Psoas muscle (tissue), 8 donors: ENCODE measurements at regions of chrX and their contacts with region 1.

Region 1: DNA sequence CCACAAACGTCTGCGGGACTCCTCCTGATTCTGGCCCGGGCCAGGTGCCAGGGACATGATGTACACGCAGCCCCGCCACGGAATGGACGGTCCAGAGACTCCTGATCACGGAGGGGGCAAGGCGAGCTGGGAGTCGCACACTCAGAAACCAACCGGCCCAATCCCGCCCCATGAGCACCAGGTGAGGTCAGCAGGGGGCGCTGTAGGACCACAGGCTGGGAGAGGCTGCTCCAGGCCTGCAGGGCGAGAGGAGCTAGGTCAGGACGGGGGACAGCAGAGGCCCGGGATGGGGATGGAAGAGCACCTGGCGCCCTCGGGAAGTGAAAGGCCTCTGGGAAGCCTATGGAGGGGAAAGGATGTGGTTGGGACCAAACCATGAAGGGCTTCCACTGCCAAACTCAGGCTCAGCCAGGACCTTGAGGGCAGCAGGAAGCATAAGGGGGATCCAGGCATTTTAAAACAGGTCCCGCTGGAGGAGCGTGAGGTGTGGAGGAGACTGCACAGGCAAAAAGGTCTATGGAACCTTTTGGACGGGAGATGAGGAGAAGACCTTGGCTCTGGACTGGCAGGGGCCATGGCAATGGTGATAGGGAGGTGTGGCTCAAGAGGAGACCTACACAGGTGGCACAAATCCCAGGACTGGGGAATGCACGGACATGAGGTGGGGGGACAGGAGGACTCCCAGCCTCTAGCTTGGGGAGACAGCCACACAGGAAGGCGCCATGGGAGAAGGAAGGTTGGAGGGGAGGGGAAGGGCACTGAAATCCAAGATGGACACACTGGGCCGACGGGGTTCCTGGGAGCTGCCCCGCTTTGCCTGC is 79.2 kb downstream of the MTMR1 start:
- DNase-seq: peak; percentile 84 to 90
- ATAC-seq: peak; percentile 82 to 90 (median 86)
- H3K4me3 ChIP-seq: no peak overlapping the region
- H3K27ac ChIP-seq: no peak overlapping the region
- H3K4me1 ChIP-seq: no peaks in the 10 kb centered on the region
- H3K27me3 ChIP-seq: no peaks in the 10 kb centered on the region
- CTCF ChIP-seq: peak; percentile 76

Region 2: GRCh38 chrX:150715184-150715583 is 57.2 kb before region 1 on chrX:
- intact Hi-C with region 1: no loop called
- DNase-seq: no peak
- ATAC-seq: no peak
- H3K4me3 ChIP-seq: no peak overlapping the region
- H3K27ac ChIP-seq: no peak overlapping the region
- H3K4me1 ChIP-seq: no peaks in the 10 kb centered on the region
- H3K27me3 ChIP-seq: no peaks in the 10 kb centered on the region
- CTCF ChIP-seq: no peak

Region 3: DNA sequence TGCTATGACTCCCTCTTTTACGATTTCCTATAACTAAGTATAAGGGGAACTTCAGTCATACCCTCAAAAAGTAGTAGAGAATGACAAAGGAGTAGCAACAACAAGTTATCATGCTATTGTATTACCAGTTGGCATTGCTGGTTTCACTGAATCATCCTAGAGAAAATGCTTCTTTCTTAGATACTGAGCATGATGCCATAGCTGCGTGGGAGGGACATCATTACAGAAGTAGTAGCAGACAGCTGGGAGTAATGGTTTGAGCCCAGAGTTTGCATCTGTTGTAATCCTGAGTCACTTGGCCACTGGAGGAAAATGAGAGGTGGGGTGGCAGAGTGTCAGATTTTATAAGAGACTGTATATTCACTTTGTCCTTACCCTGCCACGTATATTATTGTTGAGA is 40.6 kb before region 1 on chrX:
- intact Hi-C with region 1: no loop called
- DNase-seq: no peak
- ATAC-seq: peak; percentile 55 to 81 (median 62)
- H3K4me3 ChIP-seq: no peak overlapping the region
- H3K27ac ChIP-seq: peak overlapping the region; percentile 27
- H3K4me1 ChIP-seq: no peaks in the 10 kb centered on the region
- H3K27me3 ChIP-seq: no peaks in the 10 kb centered on the region
- CTCF ChIP-seq: no peak

Region 4: GRCh38 chrX:150898343-150899190 is 126.2 kb after region 1 on chrX and contains the start of gene CD99L2:
- intact Hi-C with region 1: loop called (anchors 5 to 10 kb)
- DNase-seq: peak; percentile 91 to 94
- ATAC-seq: peak; percentile 91 to 97 (median 94)
- H3K4me3 ChIP-seq: peak within 1 kb of the TSS; percentile 77
- H3K27ac ChIP-seq: peak within 1 kb of the TSS; percentile 88
- H3K4me1 ChIP-seq: no peaks in the 10 kb centered on the region
- H3K27me3 ChIP-seq: no peaks in the 10 kb centered on the region
- CTCF ChIP-seq: no peak
- total RNA-seq, gene CD99L2: 106 to 173 (median 136) TPM

Region 5: GRCh38 chrX:150982788-150983520 is 210.6 kb after region 1 on chrX and contains the start of gene HMGB3:
- intact Hi-C with region 1: loop called (anchors 5 kb)
- DNase-seq: peak; percentile 84 to 90
- ATAC-seq: peak; percentile 98 to 100 (median 99)
- H3K4me3 ChIP-seq: peak within 1 kb of the TSS; percentile 69
- H3K27ac ChIP-seq: peak within 1 kb of the TSS; percentile 61
- H3K4me1 ChIP-seq: no peaks in the 10 kb centered on the region
- H3K27me3 ChIP-seq: peaks cover 0 to 7% (median 0%) of the 10 kb centered on the region in 3 donors
- CTCF ChIP-seq: no peak
- total RNA-seq, gene HMGB3: 14.1 to 89.2 (median 27.1) TPM

Region 6: GRCh38 chrX:151004082-151004481 is 231.7 kb after region 1 on chrX:
- intact Hi-C with region 1: loop called (anchors 2 to 5 kb)
- DNase-seq: no peak
- ATAC-seq: peak in 1 of 4 donors; percentile 54
- H3K4me3 ChIP-seq: no peak overlapping the region
- H3K27ac ChIP-seq: no peak overlapping the region
- H3K4me1 ChIP-seq: no peaks in the 10 kb centered on the region
- H3K27me3 ChIP-seq: no peaks in the 10 kb centered on the region
- CTCF ChIP-seq: peak; percentile 30

Region 7: GRCh38 chrX:151082076-151082948 is 310.0 kb after region 1 on chrX:
- intact Hi-C with region 1: loop called (anchors 1 to 2 kb)
- DNase-seq: peak; percentile 67 to 76
- ATAC-seq: peak; percentile 93 to 99 (median 95)
- H3K4me3 ChIP-seq: peak overlapping the region; percentile 41
- H3K27ac ChIP-seq: no peak overlapping the region
- H3K4me1 ChIP-seq: no peaks in the 10 kb centered on the region
- H3K27me3 ChIP-seq: peaks cover 0 to 12% (median 0%) of the 10 kb centered on the region in 3 donors
- CTCF ChIP-seq: peak; percentile 89